Activated naive CD4-positive, alpha-beta T cell treated with anti-CD3 and anti-CD28 coated beads for 36 hours (primary cell): ENCODE measurements at regions of chr5 and their contacts with region 1.

Region 1: DNA sequence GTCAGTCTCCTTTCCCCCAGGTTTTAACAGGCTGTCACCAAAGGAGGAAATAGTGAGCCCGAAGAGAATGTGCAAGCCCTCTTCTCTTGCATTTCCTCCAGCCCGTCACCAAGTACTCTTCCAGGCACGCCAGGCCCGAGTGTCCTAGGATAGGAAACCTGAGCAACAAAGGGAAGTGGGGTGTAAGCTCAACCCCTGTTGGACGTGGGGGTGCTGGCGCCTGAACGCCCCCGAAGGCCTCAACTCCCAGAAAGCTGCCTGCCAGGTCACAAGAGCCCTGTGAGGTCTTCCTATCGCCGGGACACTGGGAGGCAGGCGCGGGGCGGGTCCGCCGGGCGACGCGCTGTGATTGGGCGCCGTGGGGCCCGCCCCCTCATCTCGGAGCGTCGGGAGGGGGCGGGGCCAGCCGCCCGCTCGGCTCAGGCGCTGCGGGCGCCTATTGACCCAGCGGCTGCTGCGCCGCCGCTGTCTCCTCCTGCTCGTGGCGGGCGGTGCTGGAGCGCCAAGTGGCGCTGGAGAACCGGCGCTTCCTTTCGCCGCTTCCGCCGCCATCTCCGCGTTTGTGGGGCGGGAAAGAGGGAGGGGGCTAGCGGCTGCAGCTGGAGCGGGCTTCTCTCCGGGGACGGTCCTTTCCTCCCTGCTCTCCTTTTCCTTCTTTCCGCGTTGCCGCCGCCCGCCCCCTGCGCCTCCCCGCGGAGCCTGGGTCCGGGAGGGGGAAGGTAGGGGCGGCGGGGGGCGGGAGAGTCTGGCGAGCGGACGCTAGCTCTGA is 572 bp upstream of the MAN2A1 start:
- DNase-seq: peak; percentile 81
- H3K4me3 Mint-ChIP-seq: peak overlapping the region; percentile 89
- H3K27ac Mint-ChIP-seq: peak overlapping the region; percentile 92
- H3K4me1 Mint-ChIP-seq: peaks cover 31% of the 10 kb centered on the region
- H3K27me3 Mint-ChIP-seq: no peaks in the 10 kb centered on the region

Region 2: GRCh38 chr5:108521841-108522506 is 1167.2 kb before region 1 on chr5:
- CTCF ChIA-PET with region 1: no interaction called
- intact Hi-C with region 1: loop called (anchors 2 kb)
- DNase-seq: peak; percentile 23
- H3K4me3 Mint-ChIP-seq: no peak overlapping the region
- H3K27ac Mint-ChIP-seq: no peak overlapping the region
- H3K4me1 Mint-ChIP-seq: no peaks in the 10 kb centered on the region
- H3K27me3 Mint-ChIP-seq: peaks cover 2% of the 10 kb centered on the region

Region 3: DNA sequence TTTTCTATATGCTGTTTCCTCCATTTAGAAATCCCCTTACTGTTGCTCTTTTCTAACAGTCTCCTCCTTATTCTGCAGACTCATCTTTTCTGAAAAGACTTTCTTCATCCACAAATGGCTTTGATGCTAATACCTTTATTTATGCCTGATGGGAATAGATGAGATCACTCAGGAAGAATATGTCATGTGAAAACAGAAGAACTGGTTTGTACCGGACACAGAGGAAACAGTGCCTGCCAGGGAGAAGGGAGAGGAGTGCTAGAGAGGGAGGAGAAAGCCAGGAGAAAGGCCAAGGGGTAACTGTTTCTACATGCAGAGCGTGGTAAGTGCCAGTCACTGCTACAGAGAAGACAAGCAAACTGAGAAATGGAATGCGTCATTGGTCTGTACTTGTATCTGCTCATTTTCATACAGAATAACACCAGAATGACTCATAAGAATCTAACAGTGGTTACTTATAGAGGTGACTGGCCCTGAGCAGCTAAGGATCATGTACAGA is 233.5 kb before region 1 on chr5:
- CTCF ChIA-PET with region 1: no interaction called
- intact Hi-C with region 1: loop called (anchors 2 kb)
- DNase-seq: peak; percentile 54
- H3K4me3 Mint-ChIP-seq: peak overlapping the region; percentile 23
- H3K27ac Mint-ChIP-seq: peak overlapping the region; percentile 88
- H3K4me1 Mint-ChIP-seq: peaks cover 10% of the 10 kb centered on the region
- H3K27me3 Mint-ChIP-seq: peaks cover 10% of the 10 kb centered on the region

Region 4: GRCh38 chr5:109852371-109853155 is 163.4 kb after region 1 on chr5:
- CTCF ChIA-PET with region 1: interaction called, 4 read pairs
- intact Hi-C with region 1: loop called (anchors 1 kb)
- DNase-seq: peak; percentile 30
- H3K4me3 Mint-ChIP-seq: no peak overlapping the region
- H3K27ac Mint-ChIP-seq: peak overlapping the region; percentile 54
- H3K4me1 Mint-ChIP-seq: peaks cover 75% of the 10 kb centered on the region
- H3K27me3 Mint-ChIP-seq: no peaks in the 10 kb centered on the region

Region 5: GRCh38 chr5:110054240-110054639 is 365.1 kb after region 1 on chr5:
- CTCF ChIA-PET with region 1: no interaction called
- intact Hi-C with region 1: loop called (anchors 1 kb)
- DNase-seq: peak; percentile 91
- H3K4me3 Mint-ChIP-seq: peak overlapping the region; percentile 12
- H3K27ac Mint-ChIP-seq: peak overlapping the region; percentile 87
- H3K4me1 Mint-ChIP-seq: peaks cover 37% of the 10 kb centered on the region
- H3K27me3 Mint-ChIP-seq: no peaks in the 10 kb centered on the region

Region 6: DNA sequence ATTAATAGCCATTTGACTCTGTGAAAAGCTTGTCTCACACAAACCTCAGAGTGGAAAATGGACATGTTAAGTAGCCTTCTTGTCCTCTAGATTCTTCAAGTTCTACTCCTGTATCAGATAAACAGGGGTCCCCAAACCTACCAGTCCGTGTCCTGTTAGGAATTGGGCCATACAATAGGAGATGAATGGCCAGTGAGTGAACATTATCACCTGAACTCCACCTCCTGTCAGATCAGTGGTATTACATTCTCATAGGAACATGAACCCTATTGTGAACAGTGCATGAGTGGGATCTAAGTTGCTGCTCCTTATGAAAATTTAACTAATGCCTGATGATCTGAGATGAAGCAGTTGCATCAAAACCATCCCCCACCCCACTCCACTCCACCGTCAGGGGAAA is 901.0 kb after region 1 on chr5:
- CTCF ChIA-PET with region 1: no interaction called
- intact Hi-C with region 1: loop called (anchors 1 kb)
- DNase-seq: no peak
- H3K4me3 Mint-ChIP-seq: no peak overlapping the region
- H3K27ac Mint-ChIP-seq: no peak overlapping the region
- H3K4me1 Mint-ChIP-seq: no peaks in the 10 kb centered on the region
- H3K27me3 Mint-ChIP-seq: peaks cover 4% of the 10 kb centered on the region